ENCODE measurements at regions of chr12 and their contacts with region 1.

Region 1: GRCh38 chr12:100142851-100143559 is at the start of gene BLTP3B:
- DNase-seq: peak; percentile 87
- H3K4me3 ChIP-seq: peak within 1 kb of the TSS; percentile 98
- H3K27ac ChIP-seq: peak within 1 kb of the TSS; percentile 92
- H3K4me1 ChIP-seq: peaks cover 18% of the 10 kb centered on the region
- H3K27me3 ChIP-seq: no peaks in the 10 kb centered on the region
- CTCF ChIP-seq: no peak
- total RNA-seq, gene BLTP3B: 31.6 and 31.8 TPM in 2 replicates

Region 2: DNA sequence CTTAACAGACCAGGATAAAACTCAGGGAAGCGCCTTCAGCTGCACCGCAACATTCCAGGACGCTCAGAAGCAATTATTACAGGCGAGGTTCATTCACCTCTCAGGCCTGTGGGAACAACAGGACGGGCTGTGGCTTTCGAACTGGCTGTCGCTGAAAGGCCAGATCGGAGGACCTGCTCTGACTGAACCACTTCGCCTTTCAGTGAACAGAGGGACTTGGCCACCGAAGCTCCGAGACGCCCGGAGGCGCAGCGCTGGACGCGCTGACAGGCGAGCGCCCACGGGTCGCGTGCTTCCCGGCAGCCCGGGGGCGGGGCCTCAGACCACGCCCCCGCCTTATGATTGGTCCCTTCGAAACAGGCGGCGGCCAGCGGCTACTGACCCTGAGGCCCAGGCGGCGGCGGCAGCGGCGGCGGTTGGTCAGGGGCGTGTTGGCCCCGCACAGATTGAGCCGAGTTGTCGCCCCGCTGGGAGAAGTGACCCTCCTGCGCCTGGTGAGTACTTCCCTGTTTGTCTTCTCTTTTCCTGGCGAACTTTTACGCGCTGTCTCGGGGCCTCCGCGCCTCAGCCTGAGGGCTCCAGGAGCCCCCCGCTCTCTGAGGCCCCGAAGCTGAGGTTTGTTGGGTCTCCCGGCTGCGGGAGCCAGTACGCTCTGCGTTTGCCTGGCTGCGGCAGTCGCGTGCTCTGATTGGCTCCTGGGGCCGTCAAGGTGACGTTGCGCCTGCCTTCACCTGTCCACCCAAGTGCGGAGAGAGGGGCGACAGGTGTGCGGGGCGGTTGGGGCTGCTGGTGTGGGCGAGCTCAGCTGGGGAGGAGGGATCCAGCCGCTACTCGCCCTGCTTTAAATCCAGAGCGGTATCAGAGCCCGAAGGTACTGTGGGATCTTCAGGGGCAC is 430.5 kb after region 1 on chr12 and contains the start of gene GAS2L3:
- CTCF ChIA-PET with region 1: no interaction called
- POLR2A ChIA-PET with region 1: no interaction called
- intact Hi-C with region 1: loop called (anchors 5 kb)
- DNase-seq: peak; percentile 85
- H3K4me3 ChIP-seq: peak within 1 kb of the TSS; percentile 85
- H3K27ac ChIP-seq: peak within 1 kb of the TSS; percentile 68
- H3K4me1 ChIP-seq: peaks cover 8% of the 10 kb centered on the region
- H3K27me3 ChIP-seq: no peaks in the 10 kb centered on the region
- CTCF ChIP-seq: no peak
- total RNA-seq, gene GAS2L3: 44.8 and 46.3 TPM in 2 replicates